CD8-positive, alpha-beta T cell (primary cell): ENCODE measurements at regions of chr3 and their contacts with region 1.

Region 1: GRCh38 chr3:32143849-32144757 is 37.7 kb downstream of the GPD1L start:
- DNase-seq: peak in 8 of 9 experiments; percentile 31 to 78 (median 52)
- ATAC-seq: peak; percentile 56
- H3K4me3 ChIP-seq: no peak overlapping the region
- H3K4me3 Mint-ChIP-seq: no peak overlapping the region
- H3K27ac ChIP-seq: no peak overlapping the region
- H3K27ac Mint-ChIP-seq: no peak overlapping the region
- H3K4me1 ChIP-seq: peaks cover under 1% of the 10 kb centered on the region
- H3K4me1 Mint-ChIP-seq: peaks cover 10% of the 10 kb centered on the region
- H3K27me3 ChIP-seq: no peaks in the 10 kb centered on the region
- H3K27me3 Mint-ChIP-seq: no peaks in the 10 kb centered on the region
- CTCF ChIP-seq: peak; percentile 86

Region 2: DNA sequence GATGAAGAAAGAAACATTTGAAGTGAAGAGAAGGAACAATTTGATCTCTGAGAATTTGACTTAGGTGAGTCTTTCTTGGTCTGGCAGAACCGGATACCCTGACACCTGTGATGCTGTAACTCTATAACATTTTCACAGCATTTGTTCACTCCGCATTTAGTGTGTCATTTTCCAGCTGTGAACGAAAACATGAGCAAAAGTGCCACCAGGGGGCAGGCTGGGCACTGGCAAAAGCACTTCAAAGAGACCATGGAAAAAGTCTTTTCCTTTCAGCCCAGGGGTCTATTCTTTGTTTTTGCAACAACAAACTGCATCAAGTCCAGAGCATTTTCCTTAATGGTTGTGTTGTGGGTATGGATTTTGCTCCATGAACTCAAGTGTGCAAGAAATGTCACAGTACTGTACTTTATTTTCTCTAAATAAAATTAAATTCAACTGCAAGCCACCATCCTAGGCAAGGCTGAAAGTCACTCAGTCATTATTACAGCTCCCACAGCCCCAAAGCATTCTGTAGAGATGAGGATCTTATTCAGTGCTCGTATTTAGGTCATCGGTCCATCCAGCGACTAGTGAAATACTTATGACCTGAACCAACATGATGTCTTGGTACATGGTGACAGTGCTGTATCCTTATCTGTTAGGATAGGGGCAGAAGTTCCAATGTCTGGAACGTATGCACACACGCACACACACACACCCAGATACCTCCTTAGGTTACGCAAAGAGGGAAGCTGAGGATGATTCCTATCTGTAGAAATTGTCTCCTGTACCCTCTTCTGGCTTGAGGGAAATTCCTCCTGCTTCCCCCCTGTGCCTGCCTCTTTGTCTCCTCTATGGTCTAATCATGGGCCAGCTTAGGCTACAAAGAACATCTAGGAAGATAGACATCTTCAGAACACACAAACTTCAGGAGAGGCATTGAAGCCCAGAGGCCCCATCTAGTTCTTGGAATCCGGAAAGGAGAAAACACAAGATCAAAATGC is 1375.1 kb before region 1 on chr3:
- CTCF ChIA-PET with region 1: no interaction called
- POLR2A ChIA-PET with region 1: no interaction called
- intact Hi-C with region 1: loop called in 1 of 2 experiments (anchors 2 kb)
- DNase-seq: peak; percentile 34 to 80 (median 68)
- ATAC-seq: peak; percentile 48
- H3K4me3 ChIP-seq: no peak overlapping the region
- H3K4me3 Mint-ChIP-seq: no peak overlapping the region
- H3K27ac ChIP-seq: no peak overlapping the region
- H3K27ac Mint-ChIP-seq: no peak overlapping the region
- H3K4me1 ChIP-seq: no peaks in the 10 kb centered on the region
- H3K4me1 Mint-ChIP-seq: peaks cover 3% of the 10 kb centered on the region
- H3K27me3 ChIP-seq: no peaks in the 10 kb centered on the region
- H3K27me3 Mint-ChIP-seq: peaks cover 6% of the 10 kb centered on the region
- CTCF ChIP-seq: peak; percentile 76

Region 3: DNA sequence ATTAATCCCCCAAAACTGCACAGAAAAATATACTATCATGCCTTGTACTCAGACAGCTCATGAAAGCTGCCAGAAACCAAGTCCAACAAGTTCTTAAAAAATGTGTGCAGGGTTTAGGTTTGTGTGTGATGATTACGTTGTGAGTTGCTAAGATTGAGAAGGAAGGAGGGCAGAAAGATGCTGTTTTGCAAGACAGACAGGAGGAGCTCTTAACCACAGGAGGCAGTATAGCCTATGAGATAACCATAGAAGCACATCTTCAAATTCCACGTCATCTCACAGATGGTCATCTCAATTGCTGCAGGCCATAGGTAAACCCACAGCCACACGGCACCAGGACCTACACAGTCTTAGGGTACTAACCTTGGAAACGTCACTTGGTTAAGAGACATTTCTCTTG is 419.4 kb before region 1 on chr3:
- CTCF ChIA-PET with region 1: no interaction called
- POLR2A ChIA-PET with region 1: no interaction called
- intact Hi-C with region 1: loop called in 1 of 2 experiments (anchors 10 kb)
- DNase-seq: no peak
- ATAC-seq: no peak
- H3K4me3 ChIP-seq: no peak overlapping the region
- H3K4me3 Mint-ChIP-seq: no peak overlapping the region
- H3K27ac ChIP-seq: no peak overlapping the region
- H3K27ac Mint-ChIP-seq: no peak overlapping the region
- H3K4me1 ChIP-seq: no peaks in the 10 kb centered on the region
- H3K4me1 Mint-ChIP-seq: no peaks in the 10 kb centered on the region
- H3K27me3 ChIP-seq: no peaks in the 10 kb centered on the region
- H3K27me3 Mint-ChIP-seq: peaks cover 11% of the 10 kb centered on the region
- CTCF ChIP-seq: no peak

Region 4: DNA sequence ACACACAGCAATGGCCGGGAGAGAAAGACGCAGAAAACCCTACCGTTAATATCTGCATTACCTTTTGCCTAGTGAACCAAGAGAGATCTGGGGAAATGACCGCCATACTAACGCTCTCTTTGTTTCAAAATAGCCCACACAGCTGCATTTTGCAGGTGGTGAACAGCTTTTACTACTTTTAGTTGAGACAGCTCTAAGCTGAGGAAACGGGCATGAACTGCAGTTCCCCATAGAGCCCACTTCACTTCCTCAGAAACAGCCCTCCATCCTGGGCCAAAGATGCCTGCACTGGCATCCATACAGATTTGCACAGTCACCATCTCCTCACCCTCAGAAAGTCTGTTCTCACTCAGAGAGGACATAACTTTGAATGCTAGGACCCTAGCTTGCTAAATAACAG is 117.5 kb before region 1 on chr3:
- CTCF ChIA-PET with region 1: interaction called, 20 read pairs
- POLR2A ChIA-PET with region 1: interaction called, 3 read pairs
- intact Hi-C with region 1: no loop called
- DNase-seq: no peak
- ATAC-seq: no peak
- H3K4me3 ChIP-seq: no peak overlapping the region
- H3K4me3 Mint-ChIP-seq: no peak overlapping the region
- H3K27ac ChIP-seq: no peak overlapping the region
- H3K27ac Mint-ChIP-seq: no peak overlapping the region
- H3K4me1 ChIP-seq: no peaks in the 10 kb centered on the region
- H3K4me1 Mint-ChIP-seq: no peaks in the 10 kb centered on the region
- H3K27me3 ChIP-seq: no peaks in the 10 kb centered on the region
- H3K27me3 Mint-ChIP-seq: peaks cover 12% of the 10 kb centered on the region
- CTCF ChIP-seq: no peak

Region 5: GRCh38 chr3:32106280-32106928 is 37.7 kb before region 1 on chr3 and contains the start of gene GPD1L:
- CTCF ChIA-PET with region 1: no interaction called
- POLR2A ChIA-PET with region 1: no interaction called
- intact Hi-C with region 1: loop called in 1 of 2 experiments (anchors 1 kb)
- DNase-seq: peak; percentile 84 to 95 (median 90)
- ATAC-seq: peak; percentile 97
- H3K4me3 ChIP-seq: peak within 1 kb of the TSS; percentile 70 to 80
- H3K4me3 Mint-ChIP-seq: peak within 1 kb of the TSS; percentile 91
- H3K27ac ChIP-seq: peak within 1 kb of the TSS; percentile 46 to 57
- H3K27ac Mint-ChIP-seq: peak within 1 kb of the TSS; percentile 67
- H3K4me1 ChIP-seq: peaks cover 13% of the 10 kb centered on the region
- H3K4me1 Mint-ChIP-seq: peaks cover 33% of the 10 kb centered on the region
- H3K27me3 ChIP-seq: no peaks in the 10 kb centered on the region
- H3K27me3 Mint-ChIP-seq: no peaks in the 10 kb centered on the region
- CTCF ChIP-seq: no peak
- total RNA-seq, gene GPD1L: 9.5 to 9.8 TPM

Region 6: GRCh38 chr3:32126305-32127015 is 17.6 kb before region 1 on chr3:
- CTCF ChIA-PET with region 1: interaction called, 15 read pairs
- POLR2A ChIA-PET with region 1: no interaction called
- intact Hi-C with region 1: no loop called
- DNase-seq: no peak
- ATAC-seq: no peak
- H3K4me3 ChIP-seq: no peak overlapping the region
- H3K4me3 Mint-ChIP-seq: no peak overlapping the region
- H3K27ac ChIP-seq: no peak overlapping the region
- H3K27ac Mint-ChIP-seq: no peak overlapping the region
- H3K4me1 ChIP-seq: no peaks in the 10 kb centered on the region
- H3K4me1 Mint-ChIP-seq: peaks cover 19% of the 10 kb centered on the region
- H3K27me3 ChIP-seq: no peaks in the 10 kb centered on the region
- H3K27me3 Mint-ChIP-seq: no peaks in the 10 kb centered on the region
- CTCF ChIP-seq: no peak

Region 7: GRCh38 chr3:32511005-32511404 is 366.9 kb after region 1 on chr3:
- CTCF ChIA-PET with region 1: no interaction called
- POLR2A ChIA-PET with region 1: no interaction called
- intact Hi-C with region 1: no loop called
- DNase-seq: no peak
- ATAC-seq: no peak
- H3K4me3 ChIP-seq: no peak overlapping the region
- H3K4me3 Mint-ChIP-seq: no peak overlapping the region
- H3K27ac ChIP-seq: no peak overlapping the region
- H3K27ac Mint-ChIP-seq: no peak overlapping the region
- H3K4me1 ChIP-seq: no peaks in the 10 kb centered on the region
- H3K4me1 Mint-ChIP-seq: no peaks in the 10 kb centered on the region
- H3K27me3 ChIP-seq: no peaks in the 10 kb centered on the region
- H3K27me3 Mint-ChIP-seq: no peaks in the 10 kb centered on the region
- CTCF ChIP-seq: no peak